ENCODE measurements at regions of chr6 and their contacts with region 1.

Region 1: GRCh38 chr6:35736253-35736894 is 458 bp upstream of the ARMC12 start:
- DNase-seq: peak; percentile 79
- ATAC-seq: peak; percentile 24 to 61
- H3K4me3 ChIP-seq: no peak overlapping the region
- H3K27ac ChIP-seq: no peak overlapping the region
- H3K4me1 ChIP-seq: peaks cover 35% of the 10 kb centered on the region
- H3K27me3 ChIP-seq: no peaks in the 10 kb centered on the region
- CTCF ChIP-seq: peak; percentile 88

Region 2: DNA sequence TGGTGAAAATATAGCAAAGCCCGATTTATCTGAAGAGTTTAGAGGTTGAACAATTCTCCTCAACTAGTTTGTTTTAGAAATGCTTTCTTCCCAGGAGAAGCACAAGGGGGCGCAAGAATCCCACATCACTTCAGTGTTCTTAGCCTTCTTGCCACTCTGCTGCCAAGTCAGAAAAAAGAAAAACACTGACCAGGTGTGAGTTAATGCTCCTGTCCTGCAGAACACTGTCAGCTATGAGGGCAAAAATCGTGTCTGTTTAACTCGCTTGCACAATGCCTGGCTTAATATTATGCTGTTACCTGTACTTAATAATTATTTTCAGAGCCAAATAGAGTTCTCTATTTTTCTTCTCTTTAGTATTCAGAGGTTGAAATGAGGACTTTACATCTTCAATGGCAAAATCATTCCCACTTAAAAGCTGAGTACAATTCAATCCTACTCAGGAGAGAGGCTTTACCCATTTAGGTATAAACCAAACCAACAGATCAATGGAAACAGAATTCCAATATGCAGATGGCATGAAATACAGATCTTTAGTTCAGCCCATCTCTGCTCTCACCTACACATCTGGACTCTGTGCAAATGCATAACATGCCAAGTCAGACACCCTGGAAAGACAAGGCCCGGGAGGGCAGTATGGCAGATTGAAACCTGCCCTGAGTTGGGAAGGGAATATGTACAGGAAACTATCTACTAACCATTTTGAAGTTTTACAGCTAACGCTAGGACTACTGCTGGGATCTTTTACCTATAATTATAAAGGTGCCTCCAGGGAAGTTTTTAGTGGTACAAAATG is 152.3 kb before region 1 on chr6:
- intact Hi-C with region 1: loop called (anchors 5 kb)
- DNase-seq: no peak
- ATAC-seq: peak; percentile 69 to 77
- H3K4me3 ChIP-seq: no peak overlapping the region
- H3K27ac ChIP-seq: peak overlapping the region; percentile 2
- H3K4me1 ChIP-seq: peaks cover 38% of the 10 kb centered on the region
- H3K27me3 ChIP-seq: no peaks in the 10 kb centered on the region
- CTCF ChIP-seq: peak; percentile 77